WTC11 (cell line): ENCODE measurements at regions of chr12 and their contacts with region 1.

Region 1: DNA sequence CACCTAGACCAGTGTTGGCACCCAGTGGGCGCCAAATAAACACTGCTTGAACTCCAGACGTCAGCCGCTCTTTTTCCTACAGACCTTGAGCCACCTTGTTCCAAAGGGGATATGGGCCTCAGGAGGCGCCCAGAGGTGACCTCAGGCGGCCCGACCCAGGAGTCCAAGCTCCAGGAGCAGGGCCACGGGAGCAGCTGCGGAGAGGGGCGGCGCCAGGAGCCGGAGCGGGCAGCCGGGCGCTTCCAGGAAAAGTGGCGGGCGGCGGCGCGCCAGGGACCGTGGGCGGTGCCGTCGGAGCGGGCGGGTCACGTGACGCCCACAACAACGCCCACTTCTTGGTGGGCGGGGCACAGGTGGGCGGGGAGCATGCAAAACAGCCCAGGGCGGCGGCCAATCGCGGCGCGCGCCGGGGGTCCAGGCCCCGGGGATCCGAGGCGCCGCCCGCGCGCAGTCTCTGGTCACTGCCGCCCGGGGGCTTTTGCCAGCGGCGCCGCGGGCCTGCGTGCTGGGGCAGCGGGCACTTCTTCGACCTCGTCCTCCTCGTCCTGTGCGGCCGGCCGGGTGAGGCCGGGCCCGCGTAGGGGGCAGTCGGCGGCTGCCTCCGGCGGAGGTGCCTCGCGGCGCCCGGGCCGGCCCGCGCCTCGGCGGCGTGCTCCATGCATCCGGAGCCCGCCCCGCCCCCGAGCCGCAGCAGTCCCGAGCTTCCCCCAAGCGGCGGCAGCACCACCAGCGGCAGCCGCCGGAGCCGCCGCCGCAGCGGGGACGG is at the start of gene ORAI1:
- DNase-seq: peak; percentile 96
- ATAC-seq: peak; percentile 72
- H3K4me3 Mint-ChIP-seq: peak within 1 kb of the TSS; percentile 81
- H3K27ac Mint-ChIP-seq: peak within 1 kb of the TSS; percentile 80
- H3K4me1 Mint-ChIP-seq: peaks cover 49% of the 10 kb centered on the region
- H3K27me3 Mint-ChIP-seq: no peaks in the 10 kb centered on the region
- CTCF ChIP-seq: no peak
- total RNA-seq, gene ORAI1: 27.7 to 28.9 TPM (median 28.6 TPM) in 3 replicates

Region 2: GRCh38 chr12:121637231-121637914 is 11.1 kb after region 1 on chr12:
- CTCF ChIA-PET with region 1: interaction called, 10 read pairs
- POLR2A ChIA-PET with region 1: interaction called, 4 read pairs
- DNase-seq: no peak
- ATAC-seq: peak; percentile 16; the same call in 1 of the 2 replicates
- H3K4me3 Mint-ChIP-seq: no peak overlapping the region
- H3K27ac Mint-ChIP-seq: peak overlapping the region; percentile 60; the same call in 1 of the 2 replicates
- H3K4me1 Mint-ChIP-seq: peaks cover 29% of the 10 kb centered on the region
- H3K27me3 Mint-ChIP-seq: no peaks in the 10 kb centered on the region
- CTCF ChIP-seq: no peak

Region 3: GRCh38 chr12:121649819-121650353 is 23.6 kb after region 1 on chr12:
- CTCF ChIA-PET with region 1: interaction called, 14 read pairs
- POLR2A ChIA-PET with region 1: no interaction called
- DNase-seq: no peak
- ATAC-seq: no peak
- H3K4me3 Mint-ChIP-seq: no peak overlapping the region
- H3K27ac Mint-ChIP-seq: peak overlapping the region; percentile 85
- H3K4me1 Mint-ChIP-seq: peaks cover 10% of the 10 kb centered on the region
- H3K27me3 Mint-ChIP-seq: no peaks in the 10 kb centered on the region
- CTCF ChIP-seq: no peak